Psoas muscle (tissue), 8 donors: ENCODE measurements at regions of chr11 and their contacts with region 1.

Region 1: GRCh38 chr11:12052676-12053605 is 44.5 kb upstream of the DKK3 start:
- DNase-seq: no peak
- ATAC-seq: no peak
- H3K4me3 ChIP-seq: no peak overlapping the region
- H3K27ac ChIP-seq: no peak overlapping the region
- H3K4me1 ChIP-seq: peaks cover 7% of the 10 kb centered on the region
- H3K27me3 ChIP-seq: no peaks in the 10 kb centered on the region
- CTCF ChIP-seq: no peak

Region 2: GRCh38 chr11:11798586-11799438 is 254.1 kb before region 1 on chr11:
- intact Hi-C with region 1: loop called in 1 of 2 experiments (anchors 5 kb)
- DNase-seq: peak; percentile 84 to 90
- ATAC-seq: peak; percentile 74 to 99 (median 94)
- H3K4me3 ChIP-seq: no peak overlapping the region
- H3K27ac ChIP-seq: no peak overlapping the region
- H3K4me1 ChIP-seq: no peaks in the 10 kb centered on the region
- H3K27me3 ChIP-seq: peaks cover 0 to 9% (median 3%) of the 10 kb centered on the region in 3 donors
- CTCF ChIP-seq: peak; percentile 72

Region 3: GRCh38 chr11:12100841-12101242 is 47.9 kb after region 1 on chr11:
- intact Hi-C with region 1: loop called in 1 of 2 experiments (anchors 5 kb)
- DNase-seq: no peak
- ATAC-seq: peak; percentile 17 to 70 (median 54)
- H3K4me3 ChIP-seq: no peak overlapping the region
- H3K27ac ChIP-seq: no peak overlapping the region
- H3K4me1 ChIP-seq: no peaks in the 10 kb centered on the region
- H3K27me3 ChIP-seq: peaks cover 0 to 46% (median 4%) of the 10 kb centered on the region in 3 donors
- CTCF ChIP-seq: no peak

Region 4: GRCh38 chr11:12157241-12157661 is 104.3 kb after region 1 on chr11:
- intact Hi-C with region 1: no loop called
- DNase-seq: no peak
- ATAC-seq: no peak
- H3K4me3 ChIP-seq: no peak overlapping the region
- H3K27ac ChIP-seq: peak overlapping the region; percentile 36
- H3K4me1 ChIP-seq: peaks cover 26% of the 10 kb centered on the region
- H3K27me3 ChIP-seq: no peaks in the 10 kb centered on the region
- CTCF ChIP-seq: no peak